Gastrocnemius medialis (tissue), 4 donors: ENCODE measurements at regions of chr20 and their contacts with region 1.

Region 1: GRCh38 chr20:23420943-23421931 is at the start of gene NAPB:
- DNase-seq: peak; percentile 92
- ATAC-seq: peak; percentile 89 to 91
- H3K4me3 ChIP-seq: peak within 1 kb of the TSS; percentile 83 to 100 (median 96)
- H3K27ac ChIP-seq: peak within 1 kb of the TSS; percentile 97 to 99 (median 98)
- H3K4me1 ChIP-seq: peaks cover 19 to 30% of the 10 kb centered on the region in 2 donors
- H3K27me3 ChIP-seq: no peaks in the 10 kb centered on the region
- CTCF ChIP-seq: peak; percentile 62 to 92 (median 84)
- POLR2A ChIP-seq: peak; percentile 97
- total RNA-seq, gene NAPB: 3.2 to 8.3 (median 3.8) TPM

Region 2: DNA sequence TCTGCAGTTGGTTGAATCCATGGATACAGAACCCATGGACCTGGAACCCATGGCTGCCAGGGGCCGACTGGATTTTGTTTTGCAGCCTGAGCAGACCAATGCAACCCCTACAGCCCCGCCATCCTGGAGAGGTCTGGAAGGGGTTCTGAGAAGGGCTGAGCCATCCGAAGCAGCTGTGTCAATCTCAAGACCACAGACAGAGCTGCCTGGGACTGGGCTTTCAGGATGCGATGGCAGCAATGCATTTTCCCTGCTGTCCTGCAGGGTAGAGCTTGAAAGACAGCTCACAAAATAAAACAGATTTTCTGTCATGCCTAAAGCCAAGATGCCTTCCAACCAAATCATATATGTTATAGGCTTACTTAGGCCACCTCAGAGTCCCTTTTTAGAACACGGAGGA is 196.4 kb before region 1 on chr20:
- in situ Hi-C with region 1: no loop called
- intact Hi-C with region 1: no loop called
- DNase-seq: no peak
- ATAC-seq: no peak
- H3K4me3 ChIP-seq: no peak overlapping the region
- H3K27ac ChIP-seq: no peak overlapping the region
- H3K4me1 ChIP-seq: no peaks in the 10 kb centered on the region
- H3K27me3 ChIP-seq: no peaks in the 10 kb centered on the region
- CTCF ChIP-seq: no peak
- POLR2A ChIP-seq: no peak

Region 3: GRCh38 chr20:23606652-23607049 is 185.4 kb after region 1 on chr20:
- in situ Hi-C with region 1: loop called in 1 of 4 experiments (anchors 25 kb)
- intact Hi-C with region 1: no loop called
- DNase-seq: peak; percentile 54 to 68
- ATAC-seq: peak; percentile 87 to 95
- H3K4me3 ChIP-seq: no peak overlapping the region
- H3K27ac ChIP-seq: no peak overlapping the region
- H3K4me1 ChIP-seq: no peaks in the 10 kb centered on the region
- H3K27me3 ChIP-seq: no peaks in the 10 kb centered on the region
- CTCF ChIP-seq: peak; percentile 76 to 88 (median 81)
- POLR2A ChIP-seq: no peak

Region 4: GRCh38 chr20:23826541-23827021 is 405.3 kb after region 1 on chr20 and contains the start of gene CST2:
- in situ Hi-C with region 1: no loop called
- intact Hi-C with region 1: no loop called
- DNase-seq: no peak
- ATAC-seq: no peak
- H3K4me3 ChIP-seq: no peak within 1 kb of the TSS
- H3K27ac ChIP-seq: no peak within 1 kb of the TSS
- H3K4me1 ChIP-seq: no peaks in the 10 kb centered on the region
- H3K27me3 ChIP-seq: no peaks in the 10 kb centered on the region
- CTCF ChIP-seq: no peak
- POLR2A ChIP-seq: no peak
- total RNA-seq, gene CST2: not detected

Region 5: DNA sequence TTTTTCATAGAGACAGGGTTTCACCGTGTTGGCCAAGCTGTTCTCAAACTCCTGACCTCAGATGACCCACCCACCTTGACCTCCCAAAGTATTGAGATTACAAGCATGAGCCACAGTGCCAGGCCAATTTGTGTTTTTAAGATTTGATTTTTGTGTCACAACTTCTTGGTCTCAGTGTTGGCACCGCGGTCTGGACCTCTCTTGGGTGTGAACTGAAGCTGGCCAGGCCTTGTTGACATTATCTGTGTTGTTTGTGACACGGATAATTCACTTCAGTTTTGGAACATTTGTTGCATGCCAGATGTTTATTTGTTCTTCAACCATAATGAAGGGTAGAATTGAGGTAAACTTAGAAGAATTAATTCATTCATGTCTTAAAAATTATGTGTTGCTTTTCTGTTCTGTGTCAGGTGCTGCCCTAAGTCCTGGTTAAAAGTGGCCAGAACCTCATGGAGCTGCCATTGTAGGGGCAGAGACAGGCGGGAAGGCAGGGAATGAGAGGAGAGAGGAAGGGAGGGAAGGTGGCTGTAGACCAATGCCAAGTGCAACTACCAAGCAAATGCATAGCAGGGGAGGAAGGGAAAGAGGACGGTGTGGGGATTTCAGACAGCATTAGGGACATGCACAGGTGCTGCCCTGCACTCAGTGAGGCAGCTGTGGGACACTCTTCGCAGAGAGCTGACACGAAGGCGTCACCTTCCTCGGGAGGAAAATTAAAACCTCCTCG is 546.2 kb after region 1 on chr20:
- in situ Hi-C with region 1: no loop called
- intact Hi-C with region 1: no loop called
- DNase-seq: no peak
- ATAC-seq: no peak
- H3K4me3 ChIP-seq: no peak overlapping the region
- H3K27ac ChIP-seq: no peak overlapping the region
- H3K4me1 ChIP-seq: no peaks in the 10 kb centered on the region
- H3K27me3 ChIP-seq: no peaks in the 10 kb centered on the region
- CTCF ChIP-seq: no peak
- POLR2A ChIP-seq: no peak